Colonic mucosa (tissue), 4 donors: ENCODE measurements at regions of chr2 and their contacts with region 1.

Region 1: GRCh38 chr2:188978291-188979081 is 4.3 kb downstream of the COL3A1 start:
- DNase-seq: no peak
- H3K4me3 ChIP-seq: peak overlapping the region; percentile 3
- H3K27ac ChIP-seq: peak overlapping the region; percentile 35
- H3K4me1 ChIP-seq: no peaks in the 10 kb centered on the region
- H3K27me3 ChIP-seq: no peaks in the 10 kb centered on the region
- CTCF ChIP-seq: no peak

Region 2: GRCh38 chr2:188524519-188525113 is 453.9 kb before region 1 on chr2:
- intact Hi-C with region 1: loop called (anchors 5 kb)
- DNase-seq: no peak
- H3K4me3 ChIP-seq: no peak overlapping the region
- H3K27ac ChIP-seq: no peak overlapping the region
- H3K4me1 ChIP-seq: no peaks in the 10 kb centered on the region
- H3K27me3 ChIP-seq: no peaks in the 10 kb centered on the region
- CTCF ChIP-seq: peak; percentile 73